HepG2 (cell line): ENCODE measurements at regions of chr6 and their contacts with region 1.

Region 1: DNA sequence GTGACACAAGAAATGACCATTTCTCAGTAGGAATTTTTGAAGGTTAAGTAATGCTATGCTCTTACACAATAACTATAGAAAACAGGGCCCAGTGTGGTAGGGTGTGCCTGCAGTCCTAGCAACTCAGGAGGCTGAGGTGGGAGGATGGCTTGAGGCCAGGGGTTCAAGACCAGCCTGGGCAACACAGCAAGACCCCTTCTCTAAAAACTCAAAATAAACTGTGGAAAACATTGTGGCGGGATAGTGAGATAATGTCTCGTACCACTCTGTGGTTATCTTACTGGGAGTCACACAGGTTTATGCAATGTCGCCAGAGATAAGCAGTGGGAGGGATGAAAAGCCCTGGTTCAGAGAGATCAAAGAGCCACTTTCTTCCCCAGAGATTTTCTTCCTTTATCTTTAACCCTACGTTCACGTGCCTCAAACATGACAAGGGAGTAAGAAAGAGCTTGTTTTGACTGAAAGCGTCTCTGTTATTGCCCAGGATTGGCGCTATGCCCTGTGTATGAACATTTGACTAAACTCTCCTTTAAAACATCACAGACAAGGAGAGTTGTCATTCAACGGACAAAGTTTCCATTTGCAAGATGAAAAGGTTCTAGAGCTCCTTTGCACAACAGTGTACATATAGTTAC is 13.9 kb downstream of the GCM1 start:
- DNase-seq: peak; percentile 100
- ATAC-seq: peak; percentile 89
- H3K4me3 ChIP-seq: no peak overlapping the region; a peak in 1 of 6 replicates
- H3K27ac ChIP-seq: peak overlapping the region; percentile 65
- H3K4me1 ChIP-seq: peaks cover 87% of the 10 kb centered on the region
- H3K27me3 ChIP-seq: no peaks in the 10 kb centered on the region
- CTCF ChIP-seq: no peak; the same call in 1 of the 2 replicates
- EP300 ChIP-seq: peak; percentile 62 to 99; a peak in 2 of 4 replicates
- POLR2A ChIP-seq: no peak
- RAD21 ChIP-seq: 0 out of 2 replicates have a peak, but pooled peaks have one; percentile 5

Region 2: DNA sequence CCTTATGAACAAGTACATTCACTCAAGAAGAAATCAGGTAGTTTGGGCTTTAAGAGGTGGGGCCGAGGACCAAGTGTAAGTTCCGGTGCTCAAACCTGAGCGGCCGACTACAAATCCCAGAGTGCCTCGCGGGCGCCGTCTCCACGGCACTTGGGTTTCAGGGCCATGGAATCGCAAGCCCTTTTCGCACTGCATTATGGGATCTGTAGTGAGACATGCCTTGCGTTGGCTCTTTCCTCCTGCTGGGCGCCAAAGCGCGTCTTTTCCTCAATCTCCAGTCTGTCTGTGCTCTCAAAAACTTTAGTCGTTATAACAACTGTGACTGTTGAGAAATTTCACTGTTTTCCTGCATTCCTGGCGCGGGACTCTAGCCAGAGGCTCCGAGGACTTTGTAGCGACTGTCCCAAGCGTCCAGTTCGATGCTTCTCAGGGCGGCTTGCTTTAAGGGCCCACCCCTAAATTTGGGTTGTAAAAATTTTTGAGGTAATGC is 69.9 kb before region 1 on chr6:
- CTCF ChIA-PET with region 1: no interaction called
- POLR2A ChIA-PET with region 1: interaction called, 4 read pairs
- in situ Hi-C with region 1: no loop called
- intact Hi-C with region 1: loop called (anchors 5 kb)
- DNase-seq: peak; percentile 98
- ATAC-seq: peak; percentile 74
- H3K4me3 ChIP-seq: peak overlapping the region; percentile 71 to 99 (median 92)
- H3K27ac ChIP-seq: peak overlapping the region; percentile 81
- H3K4me1 ChIP-seq: peaks cover 44% of the 10 kb centered on the region
- H3K27me3 ChIP-seq: no peaks in the 10 kb centered on the region; a peak in 1 of 5 replicates
- CTCF ChIP-seq: no peak; the same call in 1 of the 2 replicates
- EP300 ChIP-seq: 0 out of 4 replicates have a peak, but pooled peaks of 1 of the 2 experiments have one; percentile 11
- POLR2A ChIP-seq: peak in 1 of 2 experiments; percentile 39; a peak in 1 of 4 replicates
- RAD21 ChIP-seq: no peak

Region 3: DNA sequence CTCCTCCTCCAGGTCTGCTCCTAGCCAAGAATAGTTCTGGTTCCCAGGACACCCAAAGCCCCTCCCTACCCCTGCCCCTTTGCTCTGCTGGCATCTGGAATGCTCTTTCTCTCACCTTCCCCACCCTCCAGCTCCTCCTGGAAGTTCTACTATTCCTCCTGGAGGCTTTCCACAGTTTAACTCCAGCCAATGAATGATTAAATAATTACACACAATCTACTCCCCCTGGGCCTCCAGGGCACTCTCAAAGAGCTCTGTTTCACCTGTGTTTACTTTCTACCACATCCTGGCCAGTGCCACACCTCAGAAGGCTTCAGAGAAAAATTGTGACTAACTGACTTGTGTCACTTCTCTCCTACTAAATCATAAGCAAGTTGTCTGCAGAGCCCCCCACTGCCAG is 22.3 kb before region 1 on chr6:
- CTCF ChIA-PET with region 1: no interaction called
- POLR2A ChIA-PET with region 1: interaction called, 13 read pairs
- in situ Hi-C with region 1: no loop called
- intact Hi-C with region 1: no loop called
- DNase-seq: peak; percentile 85
- ATAC-seq: peak; percentile 77
- H3K4me3 ChIP-seq: no peak overlapping the region
- H3K27ac ChIP-seq: no peak overlapping the region
- H3K4me1 ChIP-seq: peaks cover 63% of the 10 kb centered on the region
- H3K27me3 ChIP-seq: no peaks in the 10 kb centered on the region
- CTCF ChIP-seq: no peak
- EP300 ChIP-seq: peak in 1 of 2 experiments; percentile 84; a peak in 2 of 4 replicates
- POLR2A ChIP-seq: no peak
- RAD21 ChIP-seq: no peak

Region 4: GRCh38 chr6:53119772-53120409 is 14.8 kb before region 1 on chr6:
- CTCF ChIA-PET with region 1: no interaction called
- POLR2A ChIA-PET with region 1: interaction called, 15 read pairs
- in situ Hi-C with region 1: no loop called
- intact Hi-C with region 1: loop called (anchors 1 kb)
- DNase-seq: peak; percentile 92
- ATAC-seq: peak; percentile 92
- H3K4me3 ChIP-seq: peak overlapping the region in 1 of 3 experiments; percentile 27; a peak in 1 of 6 replicates
- H3K27ac ChIP-seq: peak overlapping the region; percentile 65
- H3K4me1 ChIP-seq: peaks cover 48% of the 10 kb centered on the region
- H3K27me3 ChIP-seq: no peaks in the 10 kb centered on the region
- CTCF ChIP-seq: 0 out of 2 replicates have a peak, but pooled peaks have one; percentile 30
- EP300 ChIP-seq: peak; percentile 20 to 72; a peak in 3 of 4 replicates
- POLR2A ChIP-seq: no peak
- RAD21 ChIP-seq: no peak